Activated T-helper 1 cell treated with anti-CD3 and anti-CD28 coated beads, Interleukin-12 subunit alpha, Interleukin-12 subunit beta, Interleukin-2, Interleukin-4 antibody, amounts not matched to agents 30 ng/mL and 10 ng/mL and 1 ng/mL, durations not matched to agents 14 hours and 24 hours and 36 hours (primary cell): ENCODE measurements at regions of chr5 and their contacts with region 1.

Region 1: DNA sequence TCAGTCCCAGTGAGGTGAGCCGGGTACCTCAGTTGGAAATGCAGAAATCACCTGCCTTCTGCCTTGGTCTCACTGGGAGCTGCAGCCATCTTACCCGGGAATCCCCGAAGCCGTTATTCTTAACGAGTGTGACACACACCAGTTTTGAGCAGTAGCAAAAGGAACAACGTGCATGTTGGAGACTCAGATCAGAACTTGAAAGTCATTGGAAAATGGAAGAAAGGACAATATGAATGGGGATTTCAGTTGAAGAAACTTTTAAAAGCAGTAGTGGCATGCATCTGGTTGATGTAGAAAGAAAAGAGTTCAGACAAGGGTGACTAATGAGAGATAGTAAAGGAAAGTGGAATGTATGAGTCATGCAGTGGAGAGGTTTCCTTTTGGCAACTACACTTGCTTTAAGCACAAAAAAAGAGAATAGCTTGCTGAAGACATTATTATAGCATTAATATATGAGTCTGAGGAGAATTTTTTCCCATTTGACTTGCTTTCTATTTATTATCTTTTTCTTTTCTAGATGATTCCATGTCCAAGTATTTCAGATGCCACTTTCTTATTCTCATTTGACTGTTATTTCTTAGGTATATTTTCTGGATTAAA is 44.4 kb upstream of the ANKDD1B start:
- DNase-seq: peak; percentile 39
- H3K4me3 Mint-ChIP-seq: peak overlapping the region; percentile 29
- H3K27ac Mint-ChIP-seq: peak overlapping the region; percentile 81
- H3K4me1 Mint-ChIP-seq: peaks cover 53% of the 10 kb centered on the region
- H3K27me3 Mint-ChIP-seq: no peaks in the 10 kb centered on the region

Region 2: GRCh38 chr5:75320341-75320740 is 246.5 kb before region 1 on chr5:
- intact Hi-C with region 1: loop called (anchors 1 kb)
- DNase-seq: no peak
- H3K4me3 Mint-ChIP-seq: no peak overlapping the region
- H3K27ac Mint-ChIP-seq: no peak overlapping the region
- H3K4me1 Mint-ChIP-seq: peaks cover 13% of the 10 kb centered on the region
- H3K27me3 Mint-ChIP-seq: peaks cover 2% of the 10 kb centered on the region

Region 3: DNA sequence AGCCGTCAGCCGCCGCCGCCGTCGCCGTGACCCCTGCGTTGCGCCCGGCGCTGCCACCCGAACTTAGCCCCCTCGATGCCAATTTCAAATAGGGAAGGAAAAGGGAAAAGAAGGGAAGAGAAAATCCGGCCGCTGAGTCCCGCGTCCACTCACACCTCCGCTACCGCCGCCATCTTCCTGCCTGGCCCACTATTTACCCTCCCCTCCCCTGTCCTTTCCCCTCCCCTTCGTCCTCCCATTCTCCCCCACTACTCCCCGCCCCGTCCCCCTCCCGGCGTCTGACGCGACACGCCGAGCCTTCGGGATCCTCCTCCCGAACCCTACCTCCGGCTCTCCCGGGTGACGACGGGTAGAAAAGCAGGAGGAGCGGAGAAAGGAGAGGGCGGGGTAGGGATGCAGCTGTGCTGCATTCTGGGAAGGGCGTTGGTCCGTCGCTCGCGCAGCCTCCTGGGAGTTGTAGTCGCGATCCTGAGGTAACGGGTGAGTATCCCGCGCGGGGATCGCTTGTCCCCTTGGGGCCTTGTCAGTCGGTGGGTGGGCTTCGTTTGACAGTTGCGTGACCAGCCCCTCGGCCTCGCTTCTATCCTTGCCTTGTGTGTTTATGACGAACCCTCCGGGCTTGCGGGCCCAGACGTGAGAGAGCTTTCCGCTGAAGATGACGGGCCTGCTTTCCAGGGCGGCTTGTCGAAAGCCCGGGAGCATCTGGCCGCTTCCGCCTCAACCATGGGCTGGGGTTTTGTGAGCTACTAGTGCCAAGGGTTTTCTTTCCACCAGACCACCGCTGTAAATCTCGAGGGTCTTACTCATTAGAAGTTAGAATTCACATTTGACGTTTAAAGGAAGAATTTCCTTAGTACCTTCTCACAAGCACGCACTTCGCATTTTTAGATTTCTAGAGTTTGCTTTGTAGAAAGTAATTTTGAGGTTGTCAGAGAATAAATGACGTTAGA is 55.1 kb before region 1 on chr5 and contains the starts of genes CERT1 and POLK:
- intact Hi-C with region 1: loop called (anchors 1 kb)
- DNase-seq: peak; percentile 96
- H3K4me3 Mint-ChIP-seq: peak within 1 kb of the TSS; percentile 99
- H3K27ac Mint-ChIP-seq: peak within 1 kb of the TSS; percentile 93
- H3K4me1 Mint-ChIP-seq: peaks cover 62% of the 10 kb centered on the region
- H3K27me3 Mint-ChIP-seq: no peaks in the 10 kb centered on the region
- total RNA-seq, gene CERT1: 41.0 and 43.4 TPM in 2 replicates
- total RNA-seq, gene POLK: 38.0 and 40.4 TPM in 2 replicates

Region 4: DNA sequence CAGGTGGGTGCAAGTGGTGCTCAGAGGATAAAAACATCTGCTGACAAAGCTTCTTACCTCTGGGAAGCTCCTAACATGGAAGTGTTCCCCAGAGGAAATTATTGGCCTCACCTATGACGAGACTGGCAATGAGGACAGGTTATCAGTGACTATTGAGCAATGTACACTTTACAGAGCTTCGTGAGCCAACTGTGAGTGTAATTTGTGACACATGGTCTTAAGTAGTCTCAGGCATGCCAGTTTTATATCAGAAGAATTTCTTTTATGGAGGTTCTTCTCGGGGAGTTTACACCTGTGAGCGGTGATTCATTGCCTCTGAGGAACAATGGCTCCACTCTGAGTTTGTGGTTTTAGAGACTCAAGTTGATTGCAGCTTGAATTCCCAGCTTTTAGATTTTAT is 55.8 kb after region 1 on chr5:
- intact Hi-C with region 1: no loop called
- DNase-seq: no peak
- H3K4me3 Mint-ChIP-seq: no peak overlapping the region
- H3K27ac Mint-ChIP-seq: no peak overlapping the region
- H3K4me1 Mint-ChIP-seq: no peaks in the 10 kb centered on the region
- H3K27me3 Mint-ChIP-seq: no peaks in the 10 kb centered on the region

Region 5: DNA sequence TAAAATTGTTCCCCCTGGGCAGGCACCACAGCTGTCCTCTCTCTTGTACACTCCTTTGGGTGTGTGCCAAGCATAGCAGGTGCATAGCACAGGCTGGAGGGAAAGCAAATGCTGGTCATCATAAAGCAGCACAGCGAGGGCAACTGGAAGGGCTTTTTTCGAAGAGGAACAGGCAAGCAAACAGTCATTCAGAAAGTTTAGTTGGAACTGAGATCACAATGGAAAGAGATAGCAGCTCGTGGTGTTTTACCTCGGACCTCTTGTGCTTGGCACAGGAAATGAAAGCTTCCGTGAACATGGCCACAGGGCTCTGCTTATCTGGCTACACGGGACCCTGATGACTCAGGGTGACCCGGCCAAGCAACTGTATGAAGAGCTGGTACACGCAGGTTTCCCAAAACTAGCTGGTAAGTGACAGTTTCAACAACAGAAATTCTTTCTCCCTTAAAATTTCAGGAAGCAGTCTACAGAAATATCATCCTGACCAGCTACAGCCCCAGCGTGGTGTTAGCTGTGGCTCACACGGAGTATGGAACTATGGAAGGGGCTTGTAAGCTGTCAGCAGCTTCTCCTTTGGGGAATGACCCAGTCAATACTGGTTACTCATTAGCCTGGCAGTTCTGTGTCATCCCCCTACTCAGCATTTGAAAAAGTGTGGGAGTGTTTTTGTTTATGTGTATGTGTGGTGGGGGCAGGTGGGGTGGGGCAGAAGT is 102.3 kb after region 1 on chr5:
- intact Hi-C with region 1: loop called (anchors 1 kb)
- DNase-seq: peak; percentile 37
- H3K4me3 Mint-ChIP-seq: peak overlapping the region; percentile 79
- H3K27ac Mint-ChIP-seq: peak overlapping the region; percentile 91
- H3K4me1 Mint-ChIP-seq: peaks cover 36% of the 10 kb centered on the region
- H3K27me3 Mint-ChIP-seq: peaks cover 3% of the 10 kb centered on the region

Region 6: DNA sequence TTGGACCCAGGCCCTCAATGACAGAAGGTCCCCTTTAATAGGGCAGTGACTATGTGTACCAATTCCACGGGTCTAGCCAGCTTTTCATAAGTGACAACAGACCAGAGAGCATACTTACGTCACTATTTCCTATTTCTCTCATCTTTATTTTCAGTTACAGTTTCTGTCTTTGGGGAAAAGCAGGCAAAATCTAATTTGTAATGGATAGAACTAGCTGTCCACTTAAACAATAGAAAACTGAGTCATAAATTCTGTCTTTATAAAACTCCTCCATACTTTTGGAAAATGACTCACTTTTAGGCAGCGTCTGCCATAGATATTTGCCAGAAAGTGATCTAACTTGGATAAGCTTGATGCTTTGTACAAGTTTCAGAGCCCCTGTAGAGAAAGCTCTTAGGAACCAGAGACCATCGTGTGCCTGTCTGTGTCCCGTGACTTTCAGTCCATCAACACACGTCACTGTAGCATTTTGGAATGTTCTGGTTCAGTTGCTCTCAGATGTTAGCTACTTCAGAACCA is 954.5 kb after region 1 on chr5:
- intact Hi-C with region 1: loop called (anchors 5 kb)
- DNase-seq: no peak
- H3K4me3 Mint-ChIP-seq: peak overlapping the region; percentile 63
- H3K27ac Mint-ChIP-seq: peak overlapping the region; percentile 91
- H3K4me1 Mint-ChIP-seq: peaks cover 58% of the 10 kb centered on the region
- H3K27me3 Mint-ChIP-seq: no peaks in the 10 kb centered on the region